AG04450 (cell line): ENCODE measurements at regions of chr15 and their contacts with region 1.

Region 1: DNA sequence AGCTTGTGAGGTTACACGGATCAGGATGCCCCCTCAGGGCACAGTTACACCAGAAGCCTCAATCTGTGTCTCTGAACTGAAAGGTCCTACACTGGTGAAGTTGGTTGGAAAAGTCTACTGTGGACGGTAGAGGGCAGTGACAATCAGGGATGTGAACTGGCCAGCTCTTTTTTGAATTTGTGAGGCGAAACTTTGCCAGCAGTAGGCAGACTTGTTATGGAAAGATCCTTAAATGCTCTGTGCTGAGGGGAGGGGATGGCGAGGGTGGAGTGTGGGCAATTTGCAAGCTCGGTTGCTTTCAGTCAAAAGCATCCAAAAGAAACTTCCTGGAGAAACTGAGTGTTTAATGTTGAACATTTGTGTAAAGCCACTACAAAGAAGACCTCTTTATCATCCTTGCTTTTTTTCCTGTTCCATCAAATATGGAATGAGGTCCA is 127.4 kb upstream of the ABHD17C start:
- DNase-seq: peak; percentile 73
- H3K4me3 ChIP-seq: no peak overlapping the region
- H3K27ac ChIP-seq: no peak overlapping the region
- H3K27me3 ChIP-seq: no peaks in the 10 kb centered on the region
- CTCF ChIP-seq: peak; percentile 95

Region 2: DNA sequence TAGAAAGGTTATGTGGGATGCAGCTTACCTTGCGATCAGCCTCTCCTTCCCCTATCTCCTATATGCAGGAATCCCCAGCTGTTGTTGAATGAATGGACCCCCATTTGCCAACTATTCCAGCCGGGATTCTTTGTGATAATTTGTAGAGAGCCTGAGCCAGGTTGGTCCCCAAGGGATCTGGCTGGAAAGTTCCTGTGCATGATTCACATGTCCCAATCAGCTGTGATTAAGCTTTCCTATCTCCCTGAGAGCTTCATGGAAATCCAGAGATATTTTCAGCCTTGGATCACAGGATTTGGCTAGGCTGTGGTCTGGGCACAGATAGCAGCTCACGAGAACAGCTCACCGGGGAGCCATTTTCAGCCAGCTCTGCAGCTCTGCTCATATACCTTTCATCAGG is 86.8 kb before region 1 on chr15:
- CTCF ChIA-PET with region 1: interaction called, 12 read pairs
- POLR2A ChIA-PET with region 1: no interaction called
- DNase-seq: peak; percentile 74
- H3K4me3 ChIP-seq: no peak overlapping the region
- H3K27ac ChIP-seq: peak overlapping the region; percentile 90
- H3K27me3 ChIP-seq: no peaks in the 10 kb centered on the region
- CTCF ChIP-seq: no peak

Region 3: GRCh38 chr15:80507712-80508316 is 59.9 kb before region 1 on chr15:
- CTCF ChIA-PET with region 1: no interaction called
- POLR2A ChIA-PET with region 1: no interaction called
- DNase-seq: peak; percentile 82
- H3K4me3 ChIP-seq: peak overlapping the region; percentile 5; the same call in 1 of the 2 replicates
- H3K27ac ChIP-seq: peak overlapping the region; percentile 97
- H3K27me3 ChIP-seq: no peaks in the 10 kb centered on the region
- CTCF ChIP-seq: no peak

Region 4: DNA sequence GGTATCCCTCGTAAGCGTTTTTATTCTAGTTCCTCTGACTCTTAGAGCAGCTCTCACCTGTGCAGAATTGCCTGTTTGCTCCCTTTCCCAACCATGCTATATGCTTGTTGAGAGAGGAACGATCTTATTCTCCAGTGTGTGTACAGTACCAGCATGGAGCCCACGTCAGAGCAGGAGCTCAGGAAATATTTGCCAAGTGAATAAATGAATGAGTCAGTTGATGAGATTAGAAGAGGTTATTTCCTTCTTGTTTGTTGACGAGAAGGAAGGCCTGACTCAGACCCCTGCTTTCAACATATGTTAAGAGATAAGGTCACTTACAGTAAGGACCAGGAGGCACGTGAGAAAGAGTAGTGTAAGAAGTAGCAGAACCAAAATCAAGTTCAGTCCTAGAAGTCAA is 21.1 kb after region 1 on chr15:
- CTCF ChIA-PET with region 1: interaction called, 15 read pairs
- POLR2A ChIA-PET with region 1: no interaction called
- DNase-seq: peak; percentile 95
- H3K4me3 ChIP-seq: no peak overlapping the region
- H3K27ac ChIP-seq: peak overlapping the region; percentile 97
- H3K27me3 ChIP-seq: no peaks in the 10 kb centered on the region
- CTCF ChIP-seq: no peak

Region 5: GRCh38 chr15:80789296-80789695 is 221.6 kb after region 1 on chr15:
- CTCF ChIA-PET with region 1: interaction called, 10 read pairs
- POLR2A ChIA-PET with region 1: interaction called, 3 read pairs
- DNase-seq: no peak
- H3K4me3 ChIP-seq: no peak overlapping the region
- H3K27ac ChIP-seq: peak overlapping the region; percentile 73
- H3K27me3 ChIP-seq: no peaks in the 10 kb centered on the region
- CTCF ChIP-seq: no peak